ENCODE measurements at regions of chr12 and their contacts with region 1.

Region 1: GRCh38 chr12:92505254-92506231 is 197.2 kb upstream of the PLEKHG7 start:
- DNase-seq: peak; percentile 83
- H3K4me3 Mint-ChIP-seq: peak overlapping the region; percentile 89
- H3K27ac Mint-ChIP-seq: peak overlapping the region; percentile 98
- H3K4me1 Mint-ChIP-seq: peaks cover 42% of the 10 kb centered on the region
- H3K27me3 Mint-ChIP-seq: no peaks in the 10 kb centered on the region

Region 2: DNA sequence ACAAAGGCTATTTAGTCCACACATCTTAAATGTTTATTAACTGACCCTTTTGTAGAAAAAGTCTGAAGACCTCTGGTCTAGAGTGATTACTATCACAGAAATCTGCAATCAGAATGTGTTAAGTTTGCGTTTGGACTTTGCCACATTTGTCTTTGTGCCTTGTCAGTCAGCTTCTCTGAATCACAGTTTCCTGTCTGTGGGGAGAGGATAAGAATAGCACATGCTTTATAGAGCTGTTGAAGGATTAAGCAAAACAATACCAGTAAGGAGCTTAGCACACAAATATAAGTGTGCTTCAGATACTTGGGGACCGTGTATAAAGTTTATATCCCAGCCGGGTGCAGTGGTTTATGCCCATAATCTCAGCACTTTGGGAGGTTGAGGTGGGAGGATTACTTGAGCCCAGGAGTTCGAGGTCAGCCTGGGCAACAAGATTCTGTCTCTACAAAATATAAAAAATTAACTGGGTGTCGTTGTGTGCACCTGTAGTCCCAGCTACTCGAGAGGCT is 296.9 kb before region 1 on chr12:
- intact Hi-C with region 1: loop called (anchors 5 kb)
- DNase-seq: peak; percentile 82
- H3K4me3 Mint-ChIP-seq: peak overlapping the region; percentile 66
- H3K27ac Mint-ChIP-seq: peak overlapping the region; percentile 94
- H3K4me1 Mint-ChIP-seq: peaks cover 36% of the 10 kb centered on the region
- H3K27me3 Mint-ChIP-seq: no peaks in the 10 kb centered on the region

Region 3: DNA sequence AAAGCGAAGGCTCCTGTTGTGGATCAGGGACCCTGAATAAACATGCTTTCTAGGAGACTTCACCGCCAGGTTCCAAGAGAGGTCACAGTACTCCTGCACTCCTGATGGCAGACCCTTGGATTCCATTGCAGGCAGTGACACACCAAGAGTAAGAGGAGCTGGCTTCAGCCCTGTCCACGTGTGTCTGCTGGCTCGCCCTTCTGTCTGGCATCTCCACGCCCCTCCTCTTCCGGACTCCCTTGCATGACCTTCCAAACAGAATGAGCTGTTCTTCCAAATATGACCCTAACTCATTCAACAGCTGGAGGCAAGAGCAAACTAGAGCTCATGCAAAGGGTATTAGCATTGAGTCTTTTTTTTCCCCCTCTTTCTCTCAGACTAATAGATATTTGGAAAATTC is 35.7 kb before region 1 on chr12:
- intact Hi-C with region 1: loop called (anchors 1 kb)
- DNase-seq: no peak
- H3K4me3 Mint-ChIP-seq: no peak overlapping the region
- H3K27ac Mint-ChIP-seq: peak overlapping the region; percentile 66
- H3K4me1 Mint-ChIP-seq: peaks cover 26% of the 10 kb centered on the region
- H3K27me3 Mint-ChIP-seq: no peaks in the 10 kb centered on the region

Region 4: GRCh38 chr12:92493816-92494215 is 11.7 kb before region 1 on chr12:
- intact Hi-C with region 1: no loop called
- DNase-seq: no peak
- H3K4me3 Mint-ChIP-seq: no peak overlapping the region
- H3K27ac Mint-ChIP-seq: peak overlapping the region; percentile 65
- H3K4me1 Mint-ChIP-seq: peaks cover 20% of the 10 kb centered on the region
- H3K27me3 Mint-ChIP-seq: no peaks in the 10 kb centered on the region

Region 5: DNA sequence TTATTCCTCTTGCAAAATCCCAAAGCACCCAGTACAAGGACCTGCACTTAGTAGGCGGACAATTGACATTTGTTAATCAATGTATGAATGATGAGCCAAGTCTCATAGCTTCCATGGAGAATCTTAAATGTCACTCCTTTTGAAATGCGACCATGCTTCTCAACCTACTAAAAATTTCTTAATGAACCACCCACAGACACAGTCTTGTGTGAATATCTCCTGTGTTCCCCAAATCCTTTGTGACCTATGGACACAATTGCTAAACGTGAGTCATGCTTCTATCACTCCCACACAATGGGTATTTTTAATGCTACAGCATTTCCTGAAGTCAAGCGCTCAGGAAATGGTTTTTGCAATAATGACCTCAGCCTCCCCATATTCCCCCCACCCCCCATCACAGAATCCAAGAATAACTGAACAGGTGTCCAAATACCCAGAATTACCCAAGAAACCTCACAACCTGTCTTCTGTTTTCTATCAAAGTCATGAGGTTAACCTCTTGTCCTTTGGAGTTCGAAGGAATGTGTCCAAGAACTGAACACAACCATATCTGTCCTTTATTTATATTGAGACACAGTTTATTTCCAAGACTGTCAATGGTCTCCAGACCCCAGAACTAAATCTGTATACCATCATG is 33.7 kb after region 1 on chr12:
- intact Hi-C with region 1: loop called (anchors 1 kb)
- DNase-seq: peak; percentile 69
- H3K4me3 Mint-ChIP-seq: peak overlapping the region; percentile 74
- H3K27ac Mint-ChIP-seq: peak overlapping the region; percentile 97
- H3K4me1 Mint-ChIP-seq: peaks cover 64% of the 10 kb centered on the region
- H3K27me3 Mint-ChIP-seq: no peaks in the 10 kb centered on the region

Region 6: GRCh38 chr12:92649511-92650227 is 144.1 kb after region 1 on chr12:
- intact Hi-C with region 1: loop called (anchors 1 kb)
- DNase-seq: peak; percentile 87
- H3K4me3 Mint-ChIP-seq: no peak overlapping the region
- H3K27ac Mint-ChIP-seq: no peak overlapping the region
- H3K4me1 Mint-ChIP-seq: peaks cover 8% of the 10 kb centered on the region
- H3K27me3 Mint-ChIP-seq: no peaks in the 10 kb centered on the region